ENCODE measurements at regions of chr2 and their contacts with region 1.

Region 1: DNA sequence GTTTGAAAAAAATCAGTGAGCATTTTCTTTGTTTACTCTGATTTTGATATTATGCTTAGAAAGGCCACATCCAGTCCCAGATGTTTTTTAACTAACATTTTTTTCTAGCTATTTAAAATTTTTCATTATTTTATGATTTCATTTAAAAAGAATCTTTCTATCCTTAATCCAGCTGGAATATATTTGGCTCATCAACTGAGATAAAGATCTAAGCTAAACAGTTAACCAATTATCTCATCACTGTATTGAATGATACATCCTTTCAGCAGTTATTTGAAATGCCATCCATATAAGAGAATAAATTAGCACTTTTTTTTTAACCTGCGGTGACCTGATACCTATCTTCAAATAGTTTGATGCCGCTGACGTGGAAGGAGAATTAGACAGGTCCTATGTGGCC is 245.5 kb upstream of the COPS8 start:
- DNase-seq: no peak
- H3K4me3 ChIP-seq: no peak overlapping the region
- H3K27ac ChIP-seq: peak overlapping the region; percentile 46 to 65
- H3K4me1 ChIP-seq: peaks cover 0 to 53% (median 11%) of the 10 kb centered on the region in 4 donors
- H3K27me3 ChIP-seq: no peaks in the 10 kb centered on the region
- CTCF ChIP-seq: no peak

Region 2: DNA sequence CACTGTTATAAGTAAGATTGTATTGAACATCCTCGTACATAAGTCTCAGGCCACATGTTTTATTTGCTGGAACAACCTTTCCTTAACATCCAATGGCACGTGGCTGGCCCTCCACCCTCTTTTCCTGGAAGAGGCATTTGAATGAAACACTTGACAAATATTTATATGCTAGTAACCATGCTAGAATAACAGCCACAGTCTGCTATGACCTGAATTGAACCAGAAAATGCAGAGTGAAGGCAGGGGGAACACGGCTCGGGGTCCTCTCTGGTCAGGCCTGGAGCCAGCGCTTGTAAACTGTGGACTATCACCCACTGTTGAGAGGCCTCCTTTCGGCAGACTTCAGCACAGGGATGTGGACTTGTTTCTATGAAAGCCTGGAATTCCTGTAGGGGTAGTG is 47.3 kb after region 1 on chr2:
- intact Hi-C with region 1: loop called (anchors 2 kb)
- DNase-seq: peak in 1 of 2 donors; percentile 77
- H3K4me3 ChIP-seq: peak overlapping the region in 1 of 2 donors; percentile 16
- H3K27ac ChIP-seq: peak overlapping the region; percentile 82 to 92
- H3K4me1 ChIP-seq: peaks cover 0 to 42% (median 26%) of the 10 kb centered on the region in 4 donors
- H3K27me3 ChIP-seq: no peaks in the 10 kb centered on the region
- CTCF ChIP-seq: no peak

Region 3: DNA sequence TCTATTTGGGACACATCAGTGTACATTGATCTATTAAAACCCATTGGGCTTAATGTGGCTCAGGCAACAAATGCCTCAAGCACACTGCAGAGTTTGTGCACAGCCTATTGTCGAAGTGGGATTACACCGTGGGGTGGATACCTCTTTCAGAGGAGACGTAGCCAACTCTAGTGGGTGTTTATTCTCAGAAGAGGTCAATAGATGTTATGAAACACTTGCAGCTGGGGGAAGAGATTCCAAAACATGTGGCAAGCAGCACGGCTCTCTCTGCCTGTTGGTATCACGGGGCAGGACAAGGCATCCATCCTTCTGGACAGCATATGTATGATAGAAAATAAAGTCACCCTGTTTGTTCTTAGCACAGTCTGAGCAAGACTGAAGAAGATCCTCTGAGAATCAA is 124.1 kb after region 1 on chr2:
- intact Hi-C with region 1: no loop called
- DNase-seq: peak in 1 of 2 donors; percentile 64
- H3K4me3 ChIP-seq: no peak overlapping the region
- H3K27ac ChIP-seq: no peak overlapping the region
- H3K4me1 ChIP-seq: peaks cover 0 to 3% (median 0%) of the 10 kb centered on the region in 4 donors
- H3K27me3 ChIP-seq: no peaks in the 10 kb centered on the region
- CTCF ChIP-seq: no peak

Measured in tibial artery (tissue), 4 donors.